ENCODE measurements at regions of chr9 and their contacts with region 1.

Region 1: GRCh38 chr9:89340332-89340731 is 22.0 kb downstream of the SECISBP2 start:
- H3K4me3 ChIP-seq: no peak overlapping the region
- H3K27ac ChIP-seq: no peak overlapping the region
- H3K4me1 ChIP-seq: no peaks in the 10 kb centered on the region
- CTCF ChIP-seq: no peak

Region 2: GRCh38 chr9:87696641-87697040 is 1643.7 kb before region 1 on chr9:
- CTCF ChIA-PET with region 1: no interaction called
- POLR2A ChIA-PET with region 1: interaction called, 13 read pairs
- H3K4me3 ChIP-seq: no peak overlapping the region
- H3K27ac ChIP-seq: no peak overlapping the region
- H3K4me1 ChIP-seq: no peaks in the 10 kb centered on the region
- CTCF ChIP-seq: no peak

Region 3: DNA sequence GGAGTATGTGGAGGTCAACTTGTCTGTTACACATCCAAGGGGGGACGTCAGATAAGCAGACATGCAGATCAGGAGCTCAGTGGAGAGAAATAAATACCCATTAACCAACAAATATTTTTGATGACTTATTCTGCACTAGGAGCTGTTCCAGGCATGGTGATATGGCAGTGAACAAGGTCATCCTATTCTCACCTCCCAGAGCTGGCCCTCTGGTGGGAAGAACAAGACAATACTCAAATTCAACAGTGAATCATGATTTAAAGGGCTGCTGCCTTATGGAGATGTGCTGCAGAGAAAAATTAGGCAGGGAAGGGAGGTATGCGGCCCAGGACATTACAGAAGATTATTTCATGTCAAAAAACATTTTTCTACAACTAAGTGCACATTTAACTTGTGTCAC is 1497.8 kb after region 1 on chr9:
- CTCF ChIA-PET with region 1: no interaction called
- POLR2A ChIA-PET with region 1: no interaction called
- H3K4me3 ChIP-seq: no peak overlapping the region
- H3K27ac ChIP-seq: no peak overlapping the region
- H3K4me1 ChIP-seq: no peaks in the 10 kb centered on the region
- CTCF ChIP-seq: no peak